PC-9 (cell line): ENCODE measurements at regions of chr12 and their contacts with region 1.

Region 1: DNA sequence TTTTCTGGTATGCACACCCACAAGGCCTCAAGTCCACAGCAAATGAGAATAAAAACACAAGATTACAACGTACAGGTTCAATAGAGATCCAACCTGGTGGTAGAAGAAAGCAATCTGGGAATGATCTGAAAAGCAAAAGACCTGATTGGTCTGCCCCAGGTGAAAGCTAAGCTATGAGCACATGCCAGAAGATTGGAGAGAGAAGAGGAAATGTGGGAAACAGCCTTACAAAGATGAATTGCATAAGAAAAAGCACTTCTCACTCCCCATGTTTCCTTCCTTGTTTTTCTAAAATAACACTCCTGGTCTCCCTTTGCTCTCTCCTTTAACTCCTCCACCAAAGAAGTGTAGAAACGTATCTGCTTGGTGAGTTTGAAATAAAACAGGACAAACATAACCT is 77.3 kb upstream of the ANO6 start:
- DNase-seq: no peak
- H3K4me3 ChIP-seq: no peak overlapping the region
- H3K27ac ChIP-seq: no peak overlapping the region
- H3K4me1 ChIP-seq: no peaks in the 10 kb centered on the region
- H3K27me3 ChIP-seq: no peaks in the 10 kb centered on the region
- CTCF ChIP-seq: no peak

Region 2: GRCh38 chr12:45170456-45171042 is 31.9 kb after region 1 on chr12:
- CTCF ChIA-PET with region 1: no interaction called
- POLR2A ChIA-PET with region 1: no interaction called
- intact Hi-C with region 1: no loop called
- DNase-seq: peak; percentile 36 to 69
- H3K4me3 ChIP-seq: no peak overlapping the region
- H3K27ac ChIP-seq: no peak overlapping the region
- H3K4me1 ChIP-seq: no peaks in the 10 kb centered on the region
- H3K27me3 ChIP-seq: no peaks in the 10 kb centered on the region
- CTCF ChIP-seq: peak; percentile 92

Region 3: GRCh38 chr12:46669720-46670119 is 1531.1 kb after region 1 on chr12:
- CTCF ChIA-PET with region 1: no interaction called
- POLR2A ChIA-PET with region 1: interaction called, 10 read pairs
- intact Hi-C with region 1: no loop called
- DNase-seq: no peak
- H3K4me3 ChIP-seq: no peak overlapping the region
- H3K27ac ChIP-seq: no peak overlapping the region
- H3K4me1 ChIP-seq: peaks cover 27% of the 10 kb centered on the region
- H3K27me3 ChIP-seq: no peaks in the 10 kb centered on the region
- CTCF ChIP-seq: no peak